HCT116 (cell line): ENCODE measurements at regions of chr17 and their contacts with region 1.

Region 1: GRCh38 chr17:49556223-49556971 is 19.3 kb upstream of the NXPH3 start:
- DNase-seq: peak; percentile 49
- ATAC-seq: peak; percentile 94
- H3K4me3 ChIP-seq: no peak overlapping the region
- H3K27ac ChIP-seq: no peak overlapping the region; the same call in 1 of the 2 replicates
- H3K4me1 ChIP-seq: peaks cover 0 to 17% of the 10 kb centered on the region in 2 experiments; a peak in 1 of 4 replicates
- H3K27me3 ChIP-seq: no peaks in the 10 kb centered on the region
- CTCF ChIP-seq: peak; percentile 98 to 100 (median 100)
- POLR2A ChIP-seq: peak; percentile 21
- RAD21 ChIP-seq: peak; percentile 100

Region 2: GRCh38 chr17:49390548-49391324 is 165.7 kb before region 1 on chr17:
- CTCF ChIA-PET with region 1: interaction called, 12 read pairs
- POLR2A ChIA-PET with region 1: no interaction called
- RAD21 ChIA-PET with region 1: no interaction called
- intact Hi-C with region 1: no loop called
- DNase-seq: no peak
- ATAC-seq: no peak
- H3K4me3 ChIP-seq: no peak overlapping the region
- H3K27ac ChIP-seq: no peak overlapping the region; the same call in 1 of the 2 replicates
- H3K4me1 ChIP-seq: peaks cover 15 to 30% of the 10 kb centered on the region in 2 experiments
- H3K27me3 ChIP-seq: no peaks in the 10 kb centered on the region
- CTCF ChIP-seq: no peak
- POLR2A ChIP-seq: no peak
- RAD21 ChIP-seq: no peak

Region 3: GRCh38 chr17:49414622-49415350 is 141.6 kb before region 1 on chr17 and contains the start of gene PHB1:
- CTCF ChIA-PET with region 1: interaction called, 65 read pairs
- POLR2A ChIA-PET with region 1: interaction called, 3 read pairs
- RAD21 ChIA-PET with region 1: interaction called, 3 to 5 read pairs
- intact Hi-C with region 1: loop called (anchors 2 kb)
- DNase-seq: peak; percentile 98
- ATAC-seq: peak; percentile 97
- H3K4me3 ChIP-seq: peak within 1 kb of the TSS; percentile 84 to 88
- H3K27ac ChIP-seq: peak within 1 kb of the TSS; percentile 53
- H3K4me1 ChIP-seq: peaks cover 7 to 15% of the 10 kb centered on the region in 2 experiments; a peak in 3 of 4 replicates
- H3K27me3 ChIP-seq: no peaks in the 10 kb centered on the region
- CTCF ChIP-seq: no peak
- POLR2A ChIP-seq: peak; percentile 89
- RAD21 ChIP-seq: no peak
- total RNA-seq, gene PHB1: 534 TPM

Region 4: DNA sequence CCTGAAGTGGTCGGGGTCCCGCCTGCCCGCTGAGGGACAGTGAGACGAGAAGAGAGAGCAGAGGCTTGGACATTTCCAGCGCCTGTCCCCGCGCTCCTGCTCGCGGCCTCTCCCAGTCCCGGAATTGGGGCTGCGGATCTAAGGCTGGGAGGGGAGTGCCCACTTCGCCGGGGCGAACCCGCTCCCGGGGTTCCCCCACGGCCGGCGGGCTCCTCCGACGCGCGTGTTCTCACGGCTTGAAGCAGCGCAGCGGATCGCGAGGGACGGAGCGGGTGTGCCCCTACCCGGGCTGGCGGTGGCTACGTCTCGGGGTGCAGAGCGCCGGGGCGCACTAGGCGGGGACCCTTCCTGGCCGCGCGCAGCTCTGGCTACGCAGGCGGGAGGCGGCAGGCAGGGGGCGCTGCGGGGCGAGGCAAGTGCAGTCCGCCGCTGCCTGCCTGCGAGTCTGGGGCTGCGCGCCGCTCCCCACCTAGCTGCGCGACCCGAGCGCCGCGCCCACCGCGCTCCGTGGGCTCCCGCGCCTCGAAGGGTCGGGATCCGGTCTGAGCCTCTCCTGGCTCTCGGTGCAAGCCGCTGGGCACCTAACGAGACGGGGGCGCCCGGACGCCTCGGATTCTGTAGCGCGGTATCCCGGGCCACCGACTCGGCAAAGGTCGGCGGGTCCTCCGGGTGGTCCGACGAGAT is 60.1 kb before region 1 on chr17:
- CTCF ChIA-PET with region 1: interaction called, 7 read pairs
- POLR2A ChIA-PET with region 1: interaction called, 4 read pairs
- RAD21 ChIA-PET with region 1: interaction called in 1 of 2 experiments, 5 read pairs
- intact Hi-C with region 1: loop called (anchors 1 kb)
- DNase-seq: no peak
- ATAC-seq: peak; percentile 75
- H3K4me3 ChIP-seq: peak overlapping the region; percentile 53 to 61
- H3K27ac ChIP-seq: no peak overlapping the region
- H3K4me1 ChIP-seq: peaks cover 5 to 25% of the 10 kb centered on the region in 2 experiments; a peak in 3 of 4 replicates
- H3K27me3 ChIP-seq: no peaks in the 10 kb centered on the region
- CTCF ChIP-seq: peak; percentile 40 to 86 (median 74)
- POLR2A ChIP-seq: no peak
- RAD21 ChIP-seq: no peak; the same call in 1 of the 2 replicates

Region 5: DNA sequence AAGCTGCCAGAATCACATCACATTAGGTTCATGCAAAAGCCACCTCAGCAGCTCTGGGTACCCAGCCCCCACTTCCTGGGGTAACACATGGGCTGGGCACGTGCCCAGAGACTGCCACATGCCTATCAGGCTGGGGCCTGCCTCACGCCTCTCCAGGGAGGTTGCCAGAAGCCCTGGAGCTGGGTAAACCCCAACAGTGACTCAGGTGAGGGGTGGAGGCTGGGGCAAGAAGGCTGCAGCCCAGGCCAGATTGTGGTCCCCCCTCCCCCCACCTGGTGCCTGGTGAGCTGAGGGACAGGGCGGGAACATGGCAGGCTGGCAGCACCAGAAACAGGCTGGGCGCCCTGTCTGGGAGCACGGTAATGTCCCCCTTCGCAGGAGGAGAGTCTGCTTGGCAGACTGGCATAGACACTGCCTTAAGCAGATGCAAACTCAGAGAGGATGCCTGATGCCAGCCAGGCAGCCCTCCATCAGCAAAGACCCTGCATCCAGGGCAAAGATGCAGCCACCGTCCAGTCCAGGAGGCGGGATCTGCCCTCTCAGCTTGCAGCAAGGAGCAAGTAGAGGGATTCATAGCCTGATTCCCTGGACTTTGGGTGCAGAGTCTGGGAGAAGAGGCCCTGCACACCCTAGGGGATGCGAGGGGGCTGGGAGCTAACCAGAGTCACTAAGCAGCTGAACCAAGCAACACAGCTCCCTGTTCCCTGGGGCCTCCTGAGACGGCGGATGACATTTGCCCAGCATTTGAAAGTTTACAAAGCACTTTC is 32.5 kb before region 1 on chr17:
- CTCF ChIA-PET with region 1: interaction called, 10 read pairs
- POLR2A ChIA-PET with region 1: no interaction called
- RAD21 ChIA-PET with region 1: no interaction called
- intact Hi-C with region 1: no loop called
- DNase-seq: no peak
- ATAC-seq: no peak
- H3K4me3 ChIP-seq: no peak overlapping the region
- H3K27ac ChIP-seq: no peak overlapping the region; the same call in 1 of the 2 replicates
- H3K4me1 ChIP-seq: no peaks in the 10 kb centered on the region
- H3K27me3 ChIP-seq: no peaks in the 10 kb centered on the region
- CTCF ChIP-seq: no peak
- POLR2A ChIP-seq: no peak
- RAD21 ChIP-seq: no peak

Region 6: GRCh38 chr17:49582789-49583188 is 26.4 kb after region 1 on chr17:
- CTCF ChIA-PET with region 1: no interaction called
- POLR2A ChIA-PET with region 1: no interaction called
- RAD21 ChIA-PET with region 1: no interaction called
- intact Hi-C with region 1: no loop called
- DNase-seq: no peak
- ATAC-seq: no peak
- H3K4me3 ChIP-seq: no peak overlapping the region
- H3K27ac ChIP-seq: no peak overlapping the region
- H3K4me1 ChIP-seq: peaks cover 0 to 12% of the 10 kb centered on the region in 2 experiments; a peak in 2 of 4 replicates
- H3K27me3 ChIP-seq: no peaks in the 10 kb centered on the region
- CTCF ChIP-seq: no peak
- POLR2A ChIP-seq: no peak
- RAD21 ChIP-seq: no peak

Region 7: GRCh38 chr17:49694847-49695683 is 138.7 kb after region 1 on chr17:
- CTCF ChIA-PET with region 1: interaction called, 23 read pairs
- POLR2A ChIA-PET with region 1: interaction called, 4 read pairs
- RAD21 ChIA-PET with region 1: interaction called in 1 of 2 experiments, 5 read pairs
- intact Hi-C with region 1: no loop called
- DNase-seq: no peak
- ATAC-seq: peak; percentile 73
- H3K4me3 ChIP-seq: no peak overlapping the region
- H3K27ac ChIP-seq: no peak overlapping the region
- H3K4me1 ChIP-seq: no peaks in the 10 kb centered on the region
- H3K27me3 ChIP-seq: no peaks in the 10 kb centered on the region
- CTCF ChIP-seq: peak; percentile 97 to 100 (median 99)
- POLR2A ChIP-seq: no peak
- RAD21 ChIP-seq: peak; percentile 99

Region 8: DNA sequence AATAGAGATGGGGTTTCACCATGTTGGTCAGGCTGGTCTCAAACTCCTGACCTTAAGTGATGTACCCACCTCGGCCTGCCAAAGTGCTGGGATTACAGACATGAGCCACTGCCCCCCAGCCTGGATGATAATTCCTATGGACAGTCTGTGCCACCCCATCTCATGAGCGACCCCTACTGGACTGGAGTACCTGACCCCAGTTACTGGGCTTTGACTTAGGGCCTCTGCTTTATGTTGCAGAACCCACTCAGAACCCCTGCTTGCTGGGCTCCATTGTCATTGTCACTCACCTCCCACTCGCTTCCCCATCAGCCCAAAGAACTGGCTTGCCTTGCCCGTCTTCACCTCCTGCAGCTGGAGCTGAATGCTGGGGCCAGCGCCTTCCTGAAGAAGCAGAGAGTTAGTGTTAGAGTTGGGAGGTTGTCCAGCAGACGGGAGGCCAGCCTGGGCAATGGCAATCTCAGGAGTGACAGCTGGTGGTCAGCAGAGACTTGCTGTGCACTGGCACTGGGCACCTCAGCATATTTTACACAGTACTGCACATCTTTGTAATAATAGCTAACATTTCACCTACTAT is 287.5 kb after region 1 on chr17:
- CTCF ChIA-PET with region 1: interaction called, 3 read pairs
- POLR2A ChIA-PET with region 1: no interaction called
- RAD21 ChIA-PET with region 1: no interaction called
- intact Hi-C with region 1: loop called (anchors 1 kb)
- DNase-seq: no peak
- ATAC-seq: peak; percentile 86
- H3K4me3 ChIP-seq: no peak overlapping the region
- H3K27ac ChIP-seq: no peak overlapping the region
- H3K4me1 ChIP-seq: no peaks in the 10 kb centered on the region
- H3K27me3 ChIP-seq: no peaks in the 10 kb centered on the region
- CTCF ChIP-seq: peak; percentile 43 to 90 (median 79); a peak in 5 of 6 replicates
- POLR2A ChIP-seq: no peak
- RAD21 ChIP-seq: peak; percentile 49

Region 9: DNA sequence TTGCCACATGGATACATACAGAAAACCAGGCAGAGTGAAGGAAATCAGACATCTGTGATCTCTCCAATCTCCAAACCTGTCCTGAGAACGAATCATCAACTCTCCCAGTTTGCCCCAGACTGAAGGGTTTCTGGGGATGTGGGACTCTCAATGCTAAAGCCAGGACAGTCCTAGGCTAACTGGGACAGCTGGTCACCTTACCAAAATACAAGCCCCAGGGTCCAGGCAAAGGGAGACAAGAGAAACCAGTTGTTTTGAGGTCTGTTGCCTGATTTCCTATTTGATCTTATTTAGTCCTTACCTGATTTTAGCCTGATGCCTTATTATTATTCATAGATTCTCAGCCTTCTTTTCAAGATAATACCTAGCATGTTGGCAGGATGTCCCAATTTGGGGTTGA is 343.2 kb after region 1 on chr17:
- CTCF ChIA-PET with region 1: no interaction called
- POLR2A ChIA-PET with region 1: no interaction called
- RAD21 ChIA-PET with region 1: no interaction called
- intact Hi-C with region 1: no loop called
- DNase-seq: no peak
- ATAC-seq: no peak
- H3K4me3 ChIP-seq: no peak overlapping the region
- H3K27ac ChIP-seq: no peak overlapping the region
- H3K4me1 ChIP-seq: peaks cover 28 to 40% of the 10 kb centered on the region in 2 experiments
- H3K27me3 ChIP-seq: peaks cover 9% of the 10 kb centered on the region; the same call in 1 of the 2 replicates
- CTCF ChIP-seq: no peak
- POLR2A ChIP-seq: no peak
- RAD21 ChIP-seq: no peak

Region 10: DNA sequence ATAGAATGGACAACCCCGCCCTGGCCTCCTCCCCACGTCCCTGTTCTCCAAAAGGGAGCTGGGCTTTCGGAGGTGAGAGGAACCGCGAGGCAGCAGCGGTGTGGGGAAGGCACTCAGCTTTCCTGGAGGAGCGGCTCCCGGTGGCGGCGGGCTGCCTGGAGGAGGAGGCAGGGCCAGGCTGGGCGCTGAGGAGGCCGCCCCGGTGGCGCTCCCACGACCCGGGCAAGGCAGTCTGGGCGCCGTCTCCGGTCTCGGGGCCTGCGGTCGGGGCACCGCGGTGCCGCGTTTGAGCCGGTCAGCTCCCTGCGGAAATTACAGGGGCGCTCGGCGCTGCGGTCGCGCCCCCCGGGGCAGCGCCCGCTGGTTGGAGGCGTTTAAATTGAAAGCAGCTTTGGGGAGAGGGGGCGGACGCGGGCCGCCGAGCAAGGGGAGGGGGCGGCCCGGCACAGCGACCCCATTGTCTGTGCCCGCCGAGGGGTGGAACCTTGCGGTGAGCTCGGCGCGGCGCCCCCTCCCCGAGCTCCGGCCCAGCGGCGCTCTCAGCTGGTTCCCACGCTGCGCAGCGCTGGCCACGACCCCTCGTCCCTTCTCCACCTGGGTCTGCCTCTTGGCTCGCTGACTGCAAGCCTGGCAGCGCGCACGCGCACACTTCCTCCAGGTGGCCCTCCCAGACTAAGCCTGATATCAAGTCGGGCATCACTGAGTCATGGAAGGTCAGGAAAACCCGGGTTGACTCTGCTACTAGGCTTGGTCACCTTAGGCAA is 353.9 kb after region 1 on chr17:
- CTCF ChIA-PET with region 1: no interaction called
- POLR2A ChIA-PET with region 1: no interaction called
- RAD21 ChIA-PET with region 1: no interaction called
- intact Hi-C with region 1: no loop called
- DNase-seq: no peak
- ATAC-seq: no peak
- H3K4me3 ChIP-seq: no peak overlapping the region
- H3K27ac ChIP-seq: no peak overlapping the region
- H3K4me1 ChIP-seq: peaks cover 6 to 35% of the 10 kb centered on the region in 2 experiments
- H3K27me3 ChIP-seq: no peaks in the 10 kb centered on the region
- CTCF ChIP-seq: no peak
- POLR2A ChIP-seq: no peak
- RAD21 ChIP-seq: no peak